MCF 10A (cell line): ENCODE measurements at regions of chr9 and their contacts with region 1.

Region 1: GRCh38 chr9:5186416-5187169 is 1.2 kb upstream of the INSL6 start:
- DNase-seq: peak; percentile 75
- H3K4me3 Mint-ChIP-seq: no peak overlapping the region
- H3K27ac Mint-ChIP-seq: no peak overlapping the region
- H3K4me1 Mint-ChIP-seq: peaks cover 4% of the 10 kb centered on the region
- H3K27me3 Mint-ChIP-seq: peaks cover 26% of the 10 kb centered on the region
- CTCF ChIP-seq: peak; percentile 88

Region 2: GRCh38 chr9:5268890-5269715 is 82.5 kb after region 1 on chr9:
- CTCF ChIA-PET with region 1: interaction called, 5 read pairs
- POLR2A ChIA-PET with region 1: no interaction called
- intact Hi-C with region 1: loop called (anchors 2 kb)
- DNase-seq: peak; percentile 5
- H3K4me3 Mint-ChIP-seq: no peak overlapping the region
- H3K27ac Mint-ChIP-seq: no peak overlapping the region
- H3K4me1 Mint-ChIP-seq: peaks cover 14% of the 10 kb centered on the region
- H3K27me3 Mint-ChIP-seq: no peaks in the 10 kb centered on the region
- CTCF ChIP-seq: no peak

Region 3: DNA sequence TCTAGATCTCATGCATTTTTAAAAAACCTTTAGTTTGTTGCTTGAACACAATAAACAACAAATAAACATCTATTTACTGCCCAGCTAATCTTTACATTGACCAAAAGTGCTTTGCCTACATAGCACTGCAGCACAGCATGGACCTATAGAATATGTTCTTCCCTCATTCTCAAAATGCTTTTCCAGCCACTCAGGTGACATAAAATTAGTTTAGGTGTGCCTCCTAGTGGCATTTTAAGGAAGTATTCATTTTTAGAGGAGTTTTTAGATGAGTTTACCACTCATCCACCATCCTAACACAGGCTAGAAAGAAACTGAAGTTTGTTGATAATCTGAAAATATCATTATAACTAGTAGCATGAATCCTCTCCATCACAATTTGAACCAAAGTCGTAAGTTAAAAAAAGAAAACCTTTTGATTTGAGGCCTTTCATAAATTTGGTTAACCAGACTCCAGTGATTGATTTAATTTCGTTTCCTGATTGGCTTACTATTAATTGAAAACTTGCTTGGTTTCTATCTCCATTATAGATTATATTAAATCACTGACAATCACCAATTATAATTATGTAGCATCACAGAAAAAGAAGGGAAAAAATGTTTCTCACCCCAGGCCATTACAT is 238.5 kb after region 1 on chr9:
- CTCF ChIA-PET with region 1: interaction called, 17 read pairs
- POLR2A ChIA-PET with region 1: no interaction called
- intact Hi-C with region 1: loop called (anchors 2 kb)
- DNase-seq: peak; percentile 44
- H3K4me3 Mint-ChIP-seq: no peak overlapping the region
- H3K27ac Mint-ChIP-seq: no peak overlapping the region
- H3K4me1 Mint-ChIP-seq: no peaks in the 10 kb centered on the region
- H3K27me3 Mint-ChIP-seq: no peaks in the 10 kb centered on the region
- CTCF ChIP-seq: peak; percentile 51

Region 4: GRCh38 chr9:5582835-5583195 is 396.2 kb after region 1 on chr9:
- CTCF ChIA-PET with region 1: interaction called, 10 read pairs
- POLR2A ChIA-PET with region 1: no interaction called
- intact Hi-C with region 1: no loop called
- DNase-seq: no peak
- H3K4me3 Mint-ChIP-seq: no peak overlapping the region
- H3K27ac Mint-ChIP-seq: no peak overlapping the region
- H3K4me1 Mint-ChIP-seq: no peaks in the 10 kb centered on the region
- H3K27me3 Mint-ChIP-seq: no peaks in the 10 kb centered on the region
- CTCF ChIP-seq: no peak